Calu3 (cell line): ENCODE measurements at regions of chr2 and their contacts with region 1.

Region 1: DNA sequence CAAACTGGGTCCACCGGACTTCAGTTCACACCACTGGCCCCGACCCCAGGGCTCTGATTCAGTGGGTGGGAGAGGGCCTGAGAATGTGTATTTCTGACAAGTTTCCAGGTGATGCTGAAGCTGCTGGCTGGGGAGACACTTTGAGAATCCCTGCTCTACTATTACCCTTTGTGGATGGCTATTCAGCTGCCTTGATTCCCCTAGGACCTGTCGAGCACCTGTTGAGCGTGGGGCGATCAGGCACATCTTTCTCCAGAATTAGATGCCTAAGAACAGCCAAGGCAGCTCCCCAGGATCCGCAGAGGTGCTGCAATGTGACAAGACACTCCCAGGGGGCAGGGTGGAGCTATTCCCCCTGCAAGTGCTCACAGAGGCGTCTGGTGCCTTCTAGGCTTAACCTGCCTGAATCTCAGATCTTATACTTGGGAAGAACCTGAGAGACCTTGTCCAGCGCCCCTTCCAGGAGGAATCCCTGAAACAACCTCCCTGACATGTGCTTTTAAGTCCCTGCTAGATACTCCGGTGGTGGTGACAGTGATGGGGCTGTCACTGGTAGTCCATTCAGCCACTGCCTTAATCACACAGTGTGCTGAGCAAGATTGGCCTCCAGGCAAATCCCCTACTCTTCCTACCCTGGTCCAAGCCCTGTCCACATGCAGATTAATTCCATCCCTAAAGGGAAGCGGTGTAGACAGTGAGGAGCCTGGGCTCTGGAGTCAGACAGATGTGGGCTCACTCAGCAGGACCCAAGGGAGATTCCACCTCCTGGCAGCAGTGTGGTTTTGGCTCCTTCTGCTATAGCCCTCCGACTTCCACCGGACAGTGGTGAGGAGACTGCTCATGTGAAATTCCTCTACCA is 43.4 kb upstream of the OTOF start:
- DNase-seq: peak; percentile 67
- H3K4me3 Mint-ChIP-seq: no peak overlapping the region
- H3K27ac Mint-ChIP-seq: no peak overlapping the region
- H3K4me1 Mint-ChIP-seq: no peaks in the 10 kb centered on the region
- H3K27me3 Mint-ChIP-seq: peaks cover 46% of the 10 kb centered on the region
- CTCF ChIP-seq: peak; percentile 72

Region 2: GRCh38 chr2:26745609-26746327 is 224.5 kb after region 1 on chr2:
- CTCF ChIA-PET with region 1: no interaction called
- intact Hi-C with region 1: loop called (anchors 2 kb)
- DNase-seq: peak; percentile 85
- H3K4me3 Mint-ChIP-seq: no peak overlapping the region
- H3K27ac Mint-ChIP-seq: no peak overlapping the region
- H3K4me1 Mint-ChIP-seq: peaks cover 11% of the 10 kb centered on the region
- H3K27me3 Mint-ChIP-seq: peaks cover 14% of the 10 kb centered on the region
- CTCF ChIP-seq: peak; percentile 91